ENCODE measurements at regions of chr3 and their contacts with region 1.

Region 1: GRCh38 chr3:88003115-88003755 is 55.6 kb downstream of the CGGBP1 start:
- DNase-seq: no peak
- CTCF ChIP-seq: peak; percentile 64

Region 2: GRCh38 chr3:87350364-87351199 is 652.7 kb before region 1 on chr3:
- in situ Hi-C with region 1: loop called (anchors 25 kb)
- DNase-seq: peak; percentile 53
- CTCF ChIP-seq: peak; percentile 86

Region 3: DNA sequence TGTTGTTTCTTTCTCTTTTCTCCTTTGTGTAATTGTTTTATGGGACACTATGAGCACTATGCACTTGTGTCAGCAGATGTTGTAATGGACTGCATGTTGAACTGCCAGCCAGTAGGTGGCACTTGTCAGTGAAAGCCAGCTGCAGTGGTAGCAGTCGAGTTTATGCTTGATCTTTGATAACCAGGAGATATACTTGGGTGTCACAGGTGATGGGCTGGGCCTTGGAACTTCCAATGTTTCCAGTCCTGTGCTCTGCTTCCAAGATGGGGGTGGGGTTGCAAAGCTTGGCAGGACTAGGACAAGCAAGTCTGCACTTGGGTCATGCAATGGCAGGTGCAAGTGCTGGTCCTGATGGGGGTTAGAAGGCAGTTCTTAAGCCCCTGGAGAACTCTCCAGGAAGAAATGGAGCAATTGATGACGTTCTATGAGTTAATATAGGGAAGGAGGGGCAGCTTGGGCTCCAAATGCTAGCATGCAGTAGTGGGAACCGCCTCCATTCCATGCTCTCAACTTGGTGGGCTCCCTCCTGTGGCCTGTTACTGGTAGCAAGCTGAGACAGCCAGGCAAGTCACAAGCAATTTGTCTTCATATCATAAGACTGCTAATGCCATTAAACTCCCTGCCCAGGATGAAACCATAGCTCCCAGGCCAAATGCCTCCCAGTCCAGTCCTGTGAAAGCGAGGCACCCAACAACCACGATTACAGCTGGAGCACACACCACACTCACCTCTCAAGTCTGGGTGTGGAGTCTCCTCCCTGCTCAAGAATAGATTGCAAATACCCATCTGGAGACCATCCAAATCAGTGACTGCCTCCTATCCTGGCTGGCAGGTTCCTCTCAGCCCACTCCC is 231.7 kb before region 1 on chr3:
- in situ Hi-C with region 1: loop called (anchors 25 kb)
- DNase-seq: peak; percentile 26
- CTCF ChIP-seq: peak; percentile 84

Measured in GM13977 (cell line).